CD4-positive, alpha-beta memory T cell (primary cell): ENCODE measurements at regions of chr18 and their contacts with region 1.

Region 1: DNA sequence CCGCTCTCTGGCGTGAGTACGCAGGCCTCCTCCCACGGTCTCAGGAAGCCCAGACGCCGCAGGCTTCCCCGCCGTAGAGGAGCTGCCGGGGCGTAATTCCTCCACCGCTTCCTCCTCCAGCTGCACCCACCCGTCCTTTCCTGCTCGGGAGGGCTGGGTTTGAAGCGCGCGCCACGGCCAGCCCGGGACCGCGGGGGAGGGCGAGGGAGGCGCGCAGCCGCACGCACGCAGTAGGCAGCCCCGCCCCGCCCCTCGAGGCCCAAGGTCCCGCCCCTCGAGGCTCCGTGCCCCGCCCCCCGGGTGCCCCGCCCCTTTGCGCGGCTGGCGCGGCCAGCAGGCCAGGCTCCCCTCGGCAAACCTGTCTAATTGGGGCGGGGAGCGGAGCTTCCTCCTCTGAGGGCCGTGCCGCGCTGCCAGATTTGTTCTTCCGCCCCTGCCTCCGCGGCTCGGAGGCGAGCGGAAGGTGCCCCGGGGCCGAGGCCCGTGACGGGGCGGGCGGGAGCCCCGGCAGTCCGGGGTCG is at the start of gene MALT1:
- DNase-seq: peak; percentile 91 to 94 (median 93)
- H3K4me3 ChIP-seq: peak within 1 kb of the TSS; percentile 55 to 64
- H3K4me3 Mint-ChIP-seq: peak within 1 kb of the TSS; percentile 92 to 97 (median 96)
- H3K27ac ChIP-seq: peak within 1 kb of the TSS; percentile 78
- H3K27ac Mint-ChIP-seq: peak within 1 kb of the TSS; percentile 90 to 97 (median 96)
- H3K4me1 ChIP-seq: peaks cover 54% of the 10 kb centered on the region
- H3K4me1 Mint-ChIP-seq: peaks cover 45 to 65% (median 53%) of the 10 kb centered on the region in 4 donors
- H3K27me3 ChIP-seq: no peaks in the 10 kb centered on the region
- H3K27me3 Mint-ChIP-seq: no peaks in the 10 kb centered on the region
- total RNA-seq, gene MALT1: 90.4 to 96.7 TPM

Region 2: DNA sequence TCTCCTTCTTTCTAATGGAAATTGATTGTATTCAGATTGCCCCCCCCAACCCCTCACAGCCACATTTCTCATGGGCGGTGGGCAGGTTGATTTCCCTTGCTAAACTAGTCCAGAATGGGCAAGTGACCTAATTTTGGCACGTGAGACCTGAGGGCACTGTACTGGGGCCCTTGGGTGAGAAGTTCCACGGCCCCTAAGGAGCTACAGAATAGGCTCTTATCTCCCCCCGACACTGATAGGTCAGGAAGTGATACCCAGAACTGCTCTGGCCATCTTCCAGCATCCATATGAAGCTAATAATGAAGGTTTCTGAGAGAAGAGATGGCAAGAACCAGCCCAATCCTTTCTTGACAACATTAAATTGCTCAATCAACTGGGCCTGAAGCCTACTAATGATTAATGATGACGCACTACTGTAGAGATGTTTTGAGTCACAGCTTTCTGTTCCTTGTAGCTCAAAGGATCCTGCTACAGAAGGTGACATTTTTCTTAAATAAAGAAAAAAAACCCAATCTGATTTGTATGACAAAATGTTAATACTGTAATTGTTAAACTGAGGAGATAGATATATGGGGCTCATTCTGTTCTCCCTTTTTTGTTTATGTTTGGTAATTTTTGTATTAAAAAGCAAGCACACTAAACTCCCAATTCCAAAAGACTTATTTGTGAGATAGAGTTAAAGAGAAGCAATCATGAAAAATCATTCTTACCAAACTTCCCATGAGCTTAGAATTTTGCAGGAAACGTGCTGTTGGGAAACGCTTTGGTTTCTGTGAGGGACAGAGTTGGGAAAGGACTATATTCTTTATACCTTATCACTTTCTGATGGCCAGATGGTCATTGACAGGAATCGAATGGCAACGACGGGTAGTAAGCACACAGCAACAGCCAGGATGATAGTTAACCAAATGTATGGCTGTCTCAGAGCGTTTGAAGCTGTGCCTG is 1021.3 kb before region 1 on chr18:
- CTCF ChIA-PET with region 1: no interaction called
- POLR2A ChIA-PET with region 1: no interaction called
- intact Hi-C with region 1: no loop called
- DNase-seq: no peak
- H3K4me3 ChIP-seq: no peak overlapping the region
- H3K4me3 Mint-ChIP-seq: no peak overlapping the region
- H3K27ac ChIP-seq: no peak overlapping the region
- H3K27ac Mint-ChIP-seq: peak overlapping the region in 1 of 7 donors; percentile 12
- H3K4me1 ChIP-seq: no peaks in the 10 kb centered on the region
- H3K4me1 Mint-ChIP-seq: peaks cover 8 to 29% (median 19%) of the 10 kb centered on the region in 4 donors
- H3K27me3 ChIP-seq: no peaks in the 10 kb centered on the region
- H3K27me3 Mint-ChIP-seq: no peaks in the 10 kb centered on the region

Region 3: GRCh38 chr18:58529714-58530354 is 141.3 kb before region 1 on chr18:
- CTCF ChIA-PET with region 1: interaction called, 22 read pairs
- POLR2A ChIA-PET with region 1: interaction called, 4 read pairs
- intact Hi-C with region 1: loop called (anchors 1 kb)
- DNase-seq: peak; percentile 49 to 68 (median 62)
- H3K4me3 ChIP-seq: no peak overlapping the region
- H3K4me3 Mint-ChIP-seq: no peak overlapping the region
- H3K27ac ChIP-seq: no peak overlapping the region
- H3K27ac Mint-ChIP-seq: no peak overlapping the region
- H3K4me1 ChIP-seq: peaks cover 4% of the 10 kb centered on the region
- H3K4me1 Mint-ChIP-seq: peaks cover 4 to 5% (median 5%) of the 10 kb centered on the region in 4 donors
- H3K27me3 ChIP-seq: no peaks in the 10 kb centered on the region
- H3K27me3 Mint-ChIP-seq: peaks cover 0 to 3% of the 10 kb centered on the region in 2 donors

Region 4: GRCh38 chr18:58615140-58616132 is 55.7 kb before region 1 on chr18:
- CTCF ChIA-PET with region 1: interaction called, 8 read pairs
- POLR2A ChIA-PET with region 1: interaction called, 58 read pairs
- intact Hi-C with region 1: loop called (anchors 1 kb)
- DNase-seq: peak; percentile 64 to 80 (median 77)
- H3K4me3 ChIP-seq: peak overlapping the region in 1 of 2 donors; percentile 12
- H3K4me3 Mint-ChIP-seq: peak overlapping the region; percentile 55 to 89 (median 82)
- H3K27ac ChIP-seq: peak overlapping the region; percentile 63
- H3K27ac Mint-ChIP-seq: peak overlapping the region; percentile 96 to 99 (median 99)
- H3K4me1 ChIP-seq: peaks cover 39% of the 10 kb centered on the region
- H3K4me1 Mint-ChIP-seq: peaks cover 33 to 57% (median 45%) of the 10 kb centered on the region in 4 donors
- H3K27me3 ChIP-seq: no peaks in the 10 kb centered on the region
- H3K27me3 Mint-ChIP-seq: no peaks in the 10 kb centered on the region

Region 5: GRCh38 chr18:58682429-58683069 is 11.4 kb after region 1 on chr18:
- CTCF ChIA-PET with region 1: interaction called, 11 read pairs
- POLR2A ChIA-PET with region 1: interaction called, 344 read pairs
- intact Hi-C with region 1: loop called (anchors 1 kb)
- DNase-seq: no peak
- H3K4me3 ChIP-seq: no peak overlapping the region
- H3K4me3 Mint-ChIP-seq: peak overlapping the region in 2 of 8 donors; percentile 6 to 25
- H3K27ac ChIP-seq: no peak overlapping the region
- H3K27ac Mint-ChIP-seq: peak overlapping the region; percentile 44 to 87 (median 65)
- H3K4me1 ChIP-seq: peaks cover 81% of the 10 kb centered on the region
- H3K4me1 Mint-ChIP-seq: peaks cover 56 to 87% (median 69%) of the 10 kb centered on the region in 4 donors
- H3K27me3 ChIP-seq: no peaks in the 10 kb centered on the region
- H3K27me3 Mint-ChIP-seq: no peaks in the 10 kb centered on the region

Region 6: DNA sequence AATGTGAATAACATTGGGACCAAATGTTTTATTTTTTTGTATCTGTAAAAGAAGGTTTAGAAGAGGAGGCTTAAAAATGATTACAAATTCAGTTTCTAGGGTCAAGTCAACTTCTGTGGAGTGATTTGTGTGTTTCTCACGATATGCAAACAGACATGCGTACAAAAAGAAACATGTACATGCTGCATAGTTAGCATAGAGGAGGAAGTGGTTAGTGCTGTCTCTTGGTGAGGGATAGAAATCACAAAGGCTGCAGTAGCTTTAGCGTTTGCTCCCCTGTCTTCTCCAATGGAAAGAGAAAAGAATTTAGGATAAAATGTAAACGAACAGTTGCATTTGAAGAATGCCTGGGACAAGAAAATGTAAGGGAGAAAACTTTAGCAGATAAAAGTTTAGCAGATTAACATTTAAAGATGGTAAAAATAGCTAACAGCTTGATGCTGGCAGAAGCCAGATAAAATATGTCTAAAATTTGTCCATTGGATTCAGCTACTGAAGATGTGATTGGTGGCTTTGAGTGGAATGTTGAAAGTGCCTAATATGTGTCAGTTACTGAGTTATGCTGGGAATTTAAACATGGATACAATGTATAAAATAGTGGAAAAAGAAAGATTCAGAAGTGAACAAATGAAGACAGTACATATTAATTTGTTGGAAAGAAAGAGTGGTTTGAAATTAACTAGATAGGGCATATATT is 45.0 kb after region 1 on chr18:
- CTCF ChIA-PET with region 1: interaction called, 3 read pairs
- POLR2A ChIA-PET with region 1: interaction called, 54 read pairs
- intact Hi-C with region 1: loop called (anchors 1 kb)
- DNase-seq: peak in 4 of 5 donors; percentile 33 to 42 (median 37)
- H3K4me3 ChIP-seq: no peak overlapping the region
- H3K4me3 Mint-ChIP-seq: peak overlapping the region; percentile 32 to 88 (median 80)
- H3K27ac ChIP-seq: no peak overlapping the region
- H3K27ac Mint-ChIP-seq: peak overlapping the region; percentile 77 to 90 (median 85)
- H3K4me1 ChIP-seq: peaks cover 44% of the 10 kb centered on the region
- H3K4me1 Mint-ChIP-seq: peaks cover 50 to 68% (median 57%) of the 10 kb centered on the region in 4 donors
- H3K27me3 ChIP-seq: no peaks in the 10 kb centered on the region
- H3K27me3 Mint-ChIP-seq: no peaks in the 10 kb centered on the region

Region 7: DNA sequence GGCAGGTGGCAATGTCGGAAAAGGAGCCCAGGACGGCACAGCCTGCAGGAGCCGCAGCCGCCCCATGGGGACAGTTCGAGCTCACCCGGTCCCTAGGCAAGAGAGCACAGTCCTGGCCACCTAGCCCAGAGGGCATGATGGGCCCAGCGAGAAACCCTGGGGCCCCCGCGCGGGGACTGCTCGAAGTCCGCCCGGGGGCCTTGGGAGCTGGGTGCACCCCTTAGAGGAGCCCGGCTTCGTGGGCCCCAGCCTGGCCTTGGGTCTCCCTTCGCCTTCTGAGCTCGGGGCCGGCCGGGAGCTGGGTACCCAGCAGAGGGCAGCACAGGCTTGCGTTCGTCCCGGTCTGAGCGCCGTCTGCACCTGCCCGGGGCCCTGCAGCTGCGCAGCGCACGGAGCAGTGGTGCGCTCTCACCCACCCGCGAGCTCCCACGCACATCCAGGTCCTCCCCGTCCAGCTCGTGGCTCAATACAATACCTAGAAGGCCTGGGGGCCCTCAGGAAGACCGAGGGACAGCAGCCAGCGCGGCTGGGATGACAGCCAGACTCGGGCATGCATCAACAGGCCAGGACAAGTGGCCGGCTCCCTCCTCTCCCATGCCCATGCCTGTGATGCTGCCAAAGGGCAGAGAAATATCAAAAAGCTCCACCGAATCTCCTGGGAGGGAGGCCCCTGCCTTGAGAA is 97.3 kb after region 1 on chr18:
- CTCF ChIA-PET with region 1: interaction called, 30 read pairs
- POLR2A ChIA-PET with region 1: interaction called, 14 read pairs
- intact Hi-C with region 1: loop called (anchors 1 kb)
- DNase-seq: peak in 4 of 5 donors; percentile 53 to 61 (median 57)
- H3K4me3 ChIP-seq: peak overlapping the region in 1 of 2 donors; percentile 12
- H3K4me3 Mint-ChIP-seq: peak overlapping the region in 7 of 8 donors; percentile 62 to 83 (median 67)
- H3K27ac ChIP-seq: no peak overlapping the region
- H3K27ac Mint-ChIP-seq: no peak overlapping the region
- H3K4me1 ChIP-seq: peaks cover 15% of the 10 kb centered on the region
- H3K4me1 Mint-ChIP-seq: peaks cover 3 to 15% (median 10%) of the 10 kb centered on the region in 4 donors
- H3K27me3 ChIP-seq: peaks cover 4% of the 10 kb centered on the region
- H3K27me3 Mint-ChIP-seq: peaks cover 23 to 31% of the 10 kb centered on the region in 2 donors